IMR-90 (cell line): ENCODE measurements at regions of chr5 and their contacts with region 1.

Region 1: DNA sequence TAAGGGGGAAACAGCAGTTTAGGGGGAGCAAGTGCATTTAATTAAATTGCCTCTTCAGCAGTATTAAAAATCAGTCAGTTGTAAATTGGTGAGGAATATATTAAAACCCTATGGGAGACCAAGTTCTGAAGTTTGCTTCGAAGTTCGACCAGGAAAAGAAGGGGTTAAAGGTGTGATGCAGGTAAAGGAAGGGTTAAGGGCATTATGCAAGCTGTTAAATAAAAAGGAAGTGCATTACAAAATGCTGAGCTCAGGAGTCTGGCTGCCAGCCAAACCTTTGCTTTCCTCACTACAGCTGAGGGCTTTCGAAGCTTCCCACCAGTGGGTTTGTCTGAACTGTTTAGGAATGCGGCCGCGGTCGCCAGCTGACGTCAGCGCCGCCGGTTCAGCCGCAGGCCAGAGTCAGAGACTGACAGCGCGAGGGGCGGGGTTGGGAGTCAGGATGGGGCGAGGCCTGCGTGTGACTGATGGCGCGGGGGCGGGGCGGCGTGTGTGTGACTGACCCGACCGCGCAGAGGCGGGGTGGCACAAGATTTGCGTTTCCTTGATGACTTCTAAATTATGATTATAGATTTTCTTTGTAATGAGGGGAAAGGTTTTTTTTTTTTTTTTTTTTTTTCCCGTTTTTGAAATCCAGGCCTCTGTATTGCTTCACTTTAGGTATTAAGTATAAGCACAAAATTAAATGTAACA is 76.6 kb downstream of the ZSWIM6 start:
- DNase-seq: peak; percentile 99
- ATAC-seq: peak; percentile 97
- H3K4me3 ChIP-seq: no peak overlapping the region
- H3K27ac ChIP-seq: peak overlapping the region; percentile 38; the same call in 1 of the 2 replicates
- H3K4me1 ChIP-seq: peaks cover 20% of the 10 kb centered on the region
- H3K27me3 ChIP-seq: no peaks in the 10 kb centered on the region
- CTCF ChIP-seq: no peak
- POLR2A ChIP-seq: no peak
- RAD21 ChIP-seq: no peak

Region 2: GRCh38 chr5:61162010-61162831 is 246.4 kb before region 1 on chr5 and contains the start of gene SMIM15:
- CTCF ChIA-PET with region 1: no interaction called
- POLR2A ChIA-PET with region 1: no interaction called
- dilution Hi-C with region 1: no loop called
- in situ Hi-C with region 1: no loop called
- intact Hi-C with region 1: loop called (anchors 10 kb)
- DNase-seq: peak; percentile 87
- ATAC-seq: peak; percentile 95
- H3K4me3 ChIP-seq: peak within 1 kb of the TSS; percentile 94
- H3K27ac ChIP-seq: peak within 1 kb of the TSS; percentile 95
- H3K4me1 ChIP-seq: peaks cover 5% of the 10 kb centered on the region
- H3K27me3 ChIP-seq: no peaks in the 10 kb centered on the region
- CTCF ChIP-seq: no peak
- POLR2A ChIP-seq: peak; percentile 70
- RAD21 ChIP-seq: 0 out of 2 replicates have a peak, but pooled peaks have one; percentile 3
- total RNA-seq, gene SMIM15: 94.3 and 101 TPM in 2 replicates

Region 3: DNA sequence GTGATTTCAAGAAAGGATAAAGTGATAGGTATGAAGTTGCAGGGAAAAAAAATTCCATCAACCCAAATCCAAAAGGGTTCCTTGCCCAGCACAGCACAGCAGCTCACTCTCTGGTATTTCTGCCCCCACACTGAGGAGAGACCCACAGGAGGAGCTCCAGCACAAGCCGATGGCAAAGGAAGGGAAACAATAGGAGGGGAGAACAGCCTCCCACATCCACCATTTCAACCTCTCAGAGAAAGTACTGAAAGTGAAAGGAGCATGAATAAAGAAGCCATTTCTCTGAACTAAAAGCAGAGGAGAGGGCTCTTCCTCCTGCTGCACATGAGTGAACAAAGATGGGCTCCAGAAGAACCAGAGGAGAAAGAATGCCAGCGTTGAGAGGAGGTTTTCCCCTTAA is 131.4 kb before region 1 on chr5:
- CTCF ChIA-PET with region 1: no interaction called
- POLR2A ChIA-PET with region 1: no interaction called
- dilution Hi-C with region 1: no loop called
- in situ Hi-C with region 1: no loop called
- intact Hi-C with region 1: loop called (anchors 10 kb)
- DNase-seq: peak; percentile 64
- ATAC-seq: peak; percentile 56
- H3K4me3 ChIP-seq: no peak overlapping the region
- H3K27ac ChIP-seq: peak overlapping the region; percentile 78; the same call in 1 of the 2 replicates
- H3K4me1 ChIP-seq: peaks cover 32% of the 10 kb centered on the region
- H3K27me3 ChIP-seq: no peaks in the 10 kb centered on the region
- CTCF ChIP-seq: peak; percentile 54
- POLR2A ChIP-seq: no peak
- RAD21 ChIP-seq: peak; percentile 64

Region 4: GRCh38 chr5:61449804-61450492 is 41.3 kb after region 1 on chr5:
- CTCF ChIA-PET with region 1: no interaction called
- POLR2A ChIA-PET with region 1: no interaction called
- dilution Hi-C with region 1: no loop called
- in situ Hi-C with region 1: no loop called
- intact Hi-C with region 1: loop called (anchors 2 kb)
- DNase-seq: peak; percentile 91
- ATAC-seq: peak; percentile 92
- H3K4me3 ChIP-seq: no peak overlapping the region
- H3K27ac ChIP-seq: peak overlapping the region; percentile 76; the same call in 1 of the 2 replicates
- H3K4me1 ChIP-seq: peaks cover 9% of the 10 kb centered on the region
- H3K27me3 ChIP-seq: no peaks in the 10 kb centered on the region
- CTCF ChIP-seq: no peak
- POLR2A ChIP-seq: no peak
- RAD21 ChIP-seq: no peak